Stomach (tissue), 19 donors: ENCODE measurements at regions of chr12 and their contacts with region 1.

Region 1: GRCh38 chr12:52860063-52860823 is 11.4 kb upstream of the KRT78 start:
- DNase-seq: peak in 1 of 2 donors; percentile 85
- H3K4me3 ChIP-seq: no peak overlapping the region
- H3K27ac ChIP-seq: no peak overlapping the region
- H3K4me1 ChIP-seq: no peaks in the 10 kb centered on the region
- H3K27me3 ChIP-seq: no peaks in the 10 kb centered on the region
- CTCF ChIP-seq: no peak
- EP300 ChIP-seq: no peak
- POLR2A ChIP-seq: no peak

Region 2: GRCh38 chr12:52585946-52586345 is 274.3 kb before region 1 on chr12:
- intact Hi-C with region 1: loop called (anchors 5 kb)
- DNase-seq: peak in 1 of 2 donors; percentile 57
- H3K4me3 ChIP-seq: no peak overlapping the region
- H3K27ac ChIP-seq: no peak overlapping the region
- H3K4me1 ChIP-seq: no peaks in the 10 kb centered on the region
- H3K27me3 ChIP-seq: peaks cover 0 to 10% (median 0%) of the 10 kb centered on the region in 3 donors
- CTCF ChIP-seq: no peak
- EP300 ChIP-seq: no peak
- POLR2A ChIP-seq: no peak

Region 3: GRCh38 chr12:52789637-52790426 is 70.4 kb before region 1 on chr12:
- intact Hi-C with region 1: no loop called
- DNase-seq: peak; percentile 39 to 70
- H3K4me3 ChIP-seq: peak overlapping the region in 1 of 4 donors; percentile 8
- H3K27ac ChIP-seq: no peak overlapping the region
- H3K4me1 ChIP-seq: peaks cover 0 to 11% (median 8%) of the 10 kb centered on the region in 4 donors
- H3K27me3 ChIP-seq: peaks cover 0 to 63% (median 31%) of the 10 kb centered on the region in 3 donors
- CTCF ChIP-seq: no peak
- EP300 ChIP-seq: no peak
- POLR2A ChIP-seq: no peak